ENCODE measurements at regions of chr7 and their contacts with region 1.

Region 1: GRCh38 chr7:48109848-48110663 is 21.0 kb downstream of the UPP1 start:
- DNase-seq: peak; percentile 79
- ATAC-seq: peak; percentile 92
- H3K4me3 Mint-ChIP-seq: no peak overlapping the region
- H3K27ac Mint-ChIP-seq: no peak overlapping the region
- H3K4me1 Mint-ChIP-seq: peaks cover 5% of the 10 kb centered on the region
- H3K27me3 Mint-ChIP-seq: peaks cover 6% of the 10 kb centered on the region
- CTCF ChIP-seq: peak; percentile 75

Region 2: GRCh38 chr7:47266131-47266706 is 843.8 kb before region 1 on chr7:
- CTCF ChIA-PET with region 1: interaction called, 8 read pairs
- POLR2A ChIA-PET with region 1: no interaction called
- intact Hi-C with region 1: loop called (anchors 1 kb)
- DNase-seq: peak; percentile 50
- ATAC-seq: peak; percentile 92
- H3K4me3 Mint-ChIP-seq: no peak overlapping the region
- H3K27ac Mint-ChIP-seq: no peak overlapping the region
- H3K4me1 Mint-ChIP-seq: no peaks in the 10 kb centered on the region
- H3K27me3 Mint-ChIP-seq: no peaks in the 10 kb centered on the region
- CTCF ChIP-seq: peak; percentile 60

Region 3: GRCh38 chr7:47392231-47392759 is 717.8 kb before region 1 on chr7:
- CTCF ChIA-PET with region 1: no interaction called
- POLR2A ChIA-PET with region 1: no interaction called
- intact Hi-C with region 1: no loop called
- DNase-seq: no peak
- ATAC-seq: no peak
- H3K4me3 Mint-ChIP-seq: no peak overlapping the region
- H3K27ac Mint-ChIP-seq: no peak overlapping the region
- H3K4me1 Mint-ChIP-seq: peaks cover 21% of the 10 kb centered on the region
- H3K27me3 Mint-ChIP-seq: no peaks in the 10 kb centered on the region
- CTCF ChIP-seq: no peak

Region 4: GRCh38 chr7:47945261-47946001 is 164.6 kb before region 1 on chr7:
- CTCF ChIA-PET with region 1: interaction called, 71 read pairs
- POLR2A ChIA-PET with region 1: interaction called, 3 read pairs
- intact Hi-C with region 1: loop called (anchors 1 kb)
- DNase-seq: peak; percentile 61
- ATAC-seq: peak; percentile 52
- H3K4me3 Mint-ChIP-seq: no peak overlapping the region
- H3K27ac Mint-ChIP-seq: no peak overlapping the region
- H3K4me1 Mint-ChIP-seq: no peaks in the 10 kb centered on the region
- H3K27me3 Mint-ChIP-seq: peaks cover 3% of the 10 kb centered on the region
- CTCF ChIP-seq: peak; percentile 90

Region 5: DNA sequence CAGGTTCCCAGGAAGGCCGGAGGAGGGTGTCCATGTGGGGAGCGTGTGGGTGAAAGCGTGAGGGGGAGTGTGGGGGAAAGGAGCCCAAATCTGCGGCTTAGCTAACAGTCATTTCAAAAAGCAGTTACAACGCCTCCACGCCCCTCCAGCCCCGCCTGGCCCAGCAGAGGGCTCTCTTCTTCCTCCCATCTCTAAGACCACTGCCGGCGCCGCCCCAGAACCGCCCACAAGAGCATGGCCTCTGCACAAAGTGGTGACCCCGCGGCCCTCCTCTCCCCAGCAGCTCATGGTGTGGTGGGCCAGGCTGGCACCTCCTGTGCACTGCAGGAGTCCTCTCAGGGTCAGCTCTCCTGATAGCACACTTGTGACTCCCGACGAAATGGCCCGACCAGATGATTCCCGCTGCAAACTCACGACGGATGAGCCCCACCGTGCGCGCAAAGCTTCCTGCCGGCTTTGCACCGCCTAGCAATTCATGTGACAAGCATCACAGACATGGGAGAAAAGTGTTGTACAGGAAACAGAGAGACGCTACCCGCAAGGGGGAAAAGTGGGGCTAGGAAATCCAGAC is 118.2 kb before region 1 on chr7:
- CTCF ChIA-PET with region 1: interaction called, 108 read pairs
- POLR2A ChIA-PET with region 1: interaction called, 11 read pairs
- intact Hi-C with region 1: loop called (anchors 1 kb)
- DNase-seq: peak; percentile 78
- ATAC-seq: peak; percentile 98
- H3K4me3 Mint-ChIP-seq: peak overlapping the region; percentile 97
- H3K27ac Mint-ChIP-seq: peak overlapping the region; percentile 82
- H3K4me1 Mint-ChIP-seq: peaks cover 14% of the 10 kb centered on the region
- H3K27me3 Mint-ChIP-seq: no peaks in the 10 kb centered on the region
- CTCF ChIP-seq: peak; percentile 40

Region 6: DNA sequence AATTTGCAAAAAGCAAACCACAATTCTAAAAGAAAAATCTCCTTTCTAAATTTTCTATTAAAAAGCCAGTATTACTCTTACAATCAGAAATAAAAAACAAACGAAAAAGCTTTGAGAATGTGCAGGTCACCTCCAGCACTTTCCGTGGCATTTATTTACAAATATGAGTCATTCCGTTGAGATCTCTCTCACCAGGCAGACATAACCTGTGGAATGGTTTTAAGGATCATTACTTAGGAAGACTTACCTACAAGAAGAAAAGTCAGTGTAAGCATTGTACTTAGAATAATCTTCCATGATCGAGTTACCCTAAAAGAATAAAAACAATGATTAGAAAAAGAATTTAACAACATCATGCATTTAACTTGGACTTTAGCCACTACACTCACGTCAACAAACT is 84.4 kb before region 1 on chr7:
- CTCF ChIA-PET with region 1: no interaction called
- POLR2A ChIA-PET with region 1: no interaction called
- intact Hi-C with region 1: no loop called
- DNase-seq: no peak
- ATAC-seq: no peak
- H3K4me3 Mint-ChIP-seq: no peak overlapping the region
- H3K27ac Mint-ChIP-seq: no peak overlapping the region
- H3K4me1 Mint-ChIP-seq: no peaks in the 10 kb centered on the region
- H3K27me3 Mint-ChIP-seq: peaks cover 32% of the 10 kb centered on the region
- CTCF ChIP-seq: no peak

Region 7: DNA sequence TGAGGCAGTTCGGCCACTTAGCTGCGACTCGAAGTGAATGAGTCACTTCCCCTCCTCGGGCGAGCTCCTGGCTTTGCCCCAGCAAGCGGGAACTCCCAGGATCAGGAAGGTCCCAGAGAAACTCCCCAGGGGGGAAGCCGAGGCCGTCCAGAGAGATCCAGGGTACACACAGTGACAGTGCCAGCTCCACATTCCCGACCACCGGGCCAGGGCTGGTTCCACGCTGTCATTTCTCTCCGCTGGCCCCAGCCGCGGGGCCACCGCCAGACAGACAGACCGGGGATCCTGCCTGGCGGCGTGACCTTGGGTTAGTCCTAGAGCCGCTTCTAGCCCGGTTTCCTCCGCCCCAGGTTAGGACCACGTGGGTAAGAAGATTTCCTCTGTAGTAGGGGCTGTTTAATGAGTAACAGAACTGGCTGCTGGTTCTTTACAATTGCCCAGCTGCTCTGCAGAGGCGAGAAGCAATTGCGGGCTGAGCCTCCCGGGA is 21.5 kb before region 1 on chr7:
- CTCF ChIA-PET with region 1: interaction called, 11 read pairs
- POLR2A ChIA-PET with region 1: no interaction called
- intact Hi-C with region 1: loop called (anchors 1 kb)
- DNase-seq: no peak
- ATAC-seq: peak; percentile 73
- H3K4me3 Mint-ChIP-seq: peak overlapping the region; percentile 88
- H3K27ac Mint-ChIP-seq: peak overlapping the region; percentile 82
- H3K4me1 Mint-ChIP-seq: peaks cover 51% of the 10 kb centered on the region
- H3K27me3 Mint-ChIP-seq: no peaks in the 10 kb centered on the region
- CTCF ChIP-seq: no peak

Measured in activated B cell treated with CpG ODN at 0.5 μM for 24 hours (primary cell).